Posterior vena cava (tissue), 2 donors: ENCODE measurements at regions of chr9 and their contacts with region 1.

Region 1: DNA sequence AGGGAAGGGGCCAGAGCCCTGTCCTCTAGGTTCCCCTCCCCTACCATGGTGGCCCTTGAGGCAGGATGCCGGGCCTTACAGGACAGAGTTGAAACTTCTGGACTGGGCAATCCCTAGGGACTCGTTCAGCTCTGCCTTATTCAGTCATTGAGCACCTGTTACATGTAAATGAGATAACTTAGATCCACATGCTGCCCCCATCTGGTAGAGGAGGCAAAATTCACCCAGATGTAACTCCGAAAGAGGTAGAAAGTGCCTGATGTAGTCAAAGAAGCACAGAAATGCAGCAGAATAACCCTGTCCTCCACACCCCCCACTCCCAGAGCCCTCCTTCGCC is 1.5 kb downstream of the GGTA1 start:
- DNase-seq: no peak

Region 2: GRCh38 chr9:120916588-120916987 is 581.5 kb before region 1 on chr9:
- intact Hi-C with region 1: no loop called
- DNase-seq: peak; percentile 89

Region 3: GRCh38 chr9:121463026-121463807 is 34.9 kb before region 1 on chr9:
- intact Hi-C with region 1: loop called in 1 of 2 experiments (anchors 5 kb)
- DNase-seq: peak; percentile 85

Region 4: GRCh38 chr9:122239722-122240121 is 741.6 kb after region 1 on chr9:
- intact Hi-C with region 1: no loop called
- DNase-seq: no peak